MCF 10A (cell line): ENCODE measurements at regions of chrX and their contacts with region 1.

Region 1: DNA sequence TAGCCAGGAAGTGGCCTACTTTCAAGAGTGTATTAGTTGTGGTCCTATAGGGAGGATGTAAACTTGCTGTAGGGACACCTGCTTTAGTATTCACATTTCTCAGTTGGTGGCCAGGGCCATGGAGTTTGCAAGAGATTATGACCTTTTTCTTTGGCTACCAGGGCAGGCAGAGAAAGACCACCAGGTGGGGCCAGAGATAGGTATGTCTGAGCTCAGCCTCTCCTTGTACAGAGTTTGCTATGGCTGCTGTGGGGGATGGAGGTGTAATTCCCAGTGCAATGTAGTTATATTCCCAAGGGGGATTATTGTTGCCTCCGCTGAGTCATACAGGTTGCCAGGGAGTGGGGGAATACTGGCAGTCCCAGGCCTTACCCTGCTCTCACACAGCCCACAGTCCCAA is 26.3 kb upstream of the DACH2 start:
- DNase-seq: no peak
- H3K4me3 Mint-ChIP-seq: no peak overlapping the region
- H3K27ac Mint-ChIP-seq: no peak overlapping the region
- H3K4me1 Mint-ChIP-seq: no peaks in the 10 kb centered on the region
- H3K27me3 Mint-ChIP-seq: peaks cover 26% of the 10 kb centered on the region
- CTCF ChIP-seq: no peak

Region 2: DNA sequence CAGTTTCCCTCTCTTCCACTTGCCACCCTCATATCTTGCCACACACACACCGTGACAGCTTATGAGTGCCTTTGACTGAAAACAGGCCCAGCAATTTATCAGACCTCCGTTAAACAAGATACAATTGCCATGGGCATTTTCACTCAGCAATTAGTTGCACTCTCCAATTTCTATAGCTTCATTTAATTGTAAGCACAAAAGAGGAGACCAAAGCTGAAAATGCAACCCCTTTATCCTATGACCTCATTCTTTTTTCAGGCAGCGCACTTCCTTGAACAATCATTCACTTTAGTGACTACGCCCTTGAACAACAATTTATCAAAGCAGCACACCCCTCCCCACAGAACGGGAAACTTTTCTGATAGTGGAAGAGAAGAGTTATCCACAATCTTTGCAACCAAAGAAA is 746.6 kb before region 1 on chrX:
- CTCF ChIA-PET with region 1: no interaction called
- POLR2A ChIA-PET with region 1: no interaction called
- intact Hi-C with region 1: no loop called
- DNase-seq: no peak
- H3K4me3 Mint-ChIP-seq: no peak overlapping the region
- H3K27ac Mint-ChIP-seq: no peak overlapping the region
- H3K4me1 Mint-ChIP-seq: peaks cover 6% of the 10 kb centered on the region
- H3K27me3 Mint-ChIP-seq: no peaks in the 10 kb centered on the region
- CTCF ChIP-seq: no peak

Region 3: GRCh38 chrX:86133761-86134160 is 11.8 kb after region 1 on chrX:
- CTCF ChIA-PET with region 1: interaction called, 16 read pairs
- POLR2A ChIA-PET with region 1: no interaction called
- intact Hi-C with region 1: no loop called
- DNase-seq: peak; percentile 30
- H3K4me3 Mint-ChIP-seq: no peak overlapping the region
- H3K27ac Mint-ChIP-seq: no peak overlapping the region
- H3K4me1 Mint-ChIP-seq: peaks cover 6% of the 10 kb centered on the region
- H3K27me3 Mint-ChIP-seq: peaks cover 31% of the 10 kb centered on the region
- CTCF ChIP-seq: peak; percentile 44